Activated CD4-positive, alpha-beta memory T cell treated with anti-CD3 and anti-CD28 coated beads for 36 hours (primary cell): ENCODE measurements at regions of chr18 and their contacts with region 1.

Region 1: DNA sequence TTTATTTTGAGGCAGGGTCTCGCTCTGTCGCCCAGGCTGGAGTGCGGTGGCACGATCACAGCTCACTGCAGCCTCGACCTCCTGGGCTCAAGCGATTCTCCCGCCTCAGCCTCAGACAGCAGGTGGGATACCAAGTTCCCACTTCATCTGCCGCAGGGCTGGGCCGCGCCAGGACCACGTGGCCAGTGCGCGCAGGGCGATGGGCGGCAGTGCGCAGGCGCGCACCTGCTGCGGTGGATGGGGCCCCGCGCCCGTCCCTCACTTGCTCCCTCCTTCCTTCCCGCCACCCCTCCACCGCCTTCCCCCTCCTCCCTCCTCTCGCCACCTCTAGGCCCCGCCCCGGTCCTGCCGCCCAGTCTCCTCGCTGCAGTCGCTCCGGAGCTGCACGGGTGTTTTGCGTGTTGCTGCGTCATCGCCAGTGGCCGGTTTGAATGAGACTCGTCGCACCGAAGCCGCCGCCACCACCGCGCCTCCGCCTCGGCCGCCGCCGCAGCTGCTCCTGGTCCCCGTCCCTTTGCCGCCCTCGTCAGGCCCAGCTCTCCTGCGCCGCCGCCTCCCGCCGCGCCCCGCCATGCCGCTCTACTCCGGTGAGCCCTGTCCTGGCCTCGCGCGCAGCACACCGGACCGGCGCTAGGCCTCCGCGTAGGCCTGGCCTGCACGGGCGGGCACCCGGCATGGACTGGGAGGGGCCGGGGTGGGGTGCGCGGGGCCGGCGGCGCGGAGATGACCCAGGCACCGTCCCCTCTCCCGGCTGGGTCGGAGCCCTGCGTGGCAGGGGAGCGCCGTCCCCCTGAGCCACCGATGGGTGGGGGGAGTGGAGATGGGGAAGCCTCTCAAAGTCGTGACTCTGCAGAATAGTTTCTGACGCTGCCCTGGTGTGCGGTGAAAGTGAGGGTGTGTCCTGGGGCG is at the start of gene USP14:
- DNase-seq: peak; percentile 99
- H3K4me3 Mint-ChIP-seq: peak within 1 kb of the TSS; percentile 86
- H3K27ac Mint-ChIP-seq: peak within 1 kb of the TSS; percentile 93
- H3K4me1 Mint-ChIP-seq: peaks cover 27% of the 10 kb centered on the region
- H3K27me3 Mint-ChIP-seq: no peaks in the 10 kb centered on the region
- total RNA-seq, gene USP14: 88.2 to 90.8 TPM

Region 2: DNA sequence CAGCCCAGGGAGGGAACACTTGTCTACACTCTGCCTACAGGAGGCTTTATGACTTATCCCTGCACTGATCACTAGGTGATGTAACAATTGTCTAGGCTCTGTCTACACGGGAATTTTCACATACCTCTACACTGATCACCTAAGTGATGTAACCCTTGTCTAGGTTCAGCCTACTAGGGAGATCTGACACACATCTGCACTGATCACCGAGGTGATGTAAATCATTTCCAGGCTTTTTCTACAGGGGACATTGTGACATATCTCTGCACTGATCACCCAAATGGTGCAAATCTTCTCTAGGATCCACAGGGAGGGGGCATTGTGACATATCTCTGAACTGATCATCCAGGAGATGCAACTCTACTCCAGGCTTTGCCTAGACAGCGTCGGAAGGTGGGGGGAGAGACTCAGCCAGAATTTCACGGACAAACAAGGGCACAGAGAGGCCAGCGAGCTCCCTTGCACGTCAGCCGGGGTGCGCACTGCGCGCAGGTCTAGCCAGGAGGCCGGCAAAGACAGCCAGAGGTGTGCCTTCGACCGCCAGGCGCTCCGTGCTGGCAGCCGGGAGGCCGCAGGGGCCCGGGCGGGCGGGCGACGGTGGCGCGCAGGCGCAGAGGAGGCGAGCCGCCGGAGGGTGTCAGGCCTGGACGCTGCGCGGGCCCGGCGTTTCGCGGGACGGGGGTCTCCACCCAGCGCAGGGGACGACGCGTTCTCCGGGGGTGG is 46.9 kb before region 1 on chr18:
- CTCF ChIA-PET with region 1: interaction called, 3 read pairs
- POLR2A ChIA-PET with region 1: no interaction called
- intact Hi-C with region 1: loop called (anchors 2 kb)
- DNase-seq: peak; percentile 80
- H3K4me3 Mint-ChIP-seq: peak overlapping the region; percentile 73
- H3K27ac Mint-ChIP-seq: peak overlapping the region; percentile 86
- H3K4me1 Mint-ChIP-seq: peaks cover 12% of the 10 kb centered on the region
- H3K27me3 Mint-ChIP-seq: no peaks in the 10 kb centered on the region